ENCODE measurements at regions of chr3 and their contacts with region 1.

Region 1: DNA sequence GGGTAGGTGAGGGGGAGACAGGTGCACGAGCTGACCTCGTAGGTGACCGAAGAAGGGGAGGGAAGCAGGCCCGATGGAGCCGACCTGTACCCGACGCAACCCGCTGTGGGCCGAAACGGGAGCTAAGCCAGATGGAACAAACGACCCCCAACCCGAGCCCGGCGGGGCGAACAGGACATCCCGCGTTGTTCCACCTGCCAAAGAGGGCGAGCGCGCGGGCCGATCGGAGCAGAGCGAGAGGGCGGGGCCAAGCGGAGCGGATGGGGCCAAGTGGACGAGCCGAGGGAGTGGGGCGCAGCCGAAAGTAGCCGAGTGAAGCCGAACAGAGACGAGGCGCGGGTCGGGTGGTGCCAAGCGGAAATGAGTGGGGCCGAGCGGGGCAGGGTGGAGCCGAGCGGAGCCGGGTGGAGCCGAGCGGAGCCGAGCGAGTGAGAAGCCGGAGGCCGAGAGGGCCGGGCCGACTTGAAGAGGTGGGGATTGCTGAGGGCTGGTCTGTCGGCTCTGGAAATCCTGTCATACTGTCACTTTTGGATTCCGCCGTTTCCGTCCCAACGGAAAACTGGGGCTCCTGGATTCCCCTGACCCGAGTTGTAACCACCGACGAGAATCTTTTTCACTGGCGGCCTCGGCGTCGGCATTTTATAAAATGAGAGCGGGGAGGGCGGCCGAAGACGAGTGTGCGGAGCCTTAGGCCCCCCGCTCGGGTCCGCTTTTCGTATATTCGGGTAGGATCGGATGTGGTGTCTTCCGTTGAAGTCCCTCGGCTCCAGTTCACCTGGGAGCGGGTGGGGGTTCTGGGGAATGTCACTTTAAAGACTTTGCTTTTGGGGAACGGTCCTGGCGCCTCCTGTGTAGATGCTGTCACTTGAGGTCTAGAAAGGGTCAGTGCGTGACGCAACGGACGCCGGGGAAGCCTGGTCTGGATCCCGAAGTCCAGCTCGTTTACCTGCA is 15.6 kb upstream of the WNT7A start:
- DNase-seq: peak; percentile 98
- H3K4me3 Mint-ChIP-seq: peak overlapping the region; percentile 79
- H3K27ac Mint-ChIP-seq: peak overlapping the region; percentile 61
- H3K4me1 Mint-ChIP-seq: peaks cover 23% of the 10 kb centered on the region
- H3K27me3 Mint-ChIP-seq: no peaks in the 10 kb centered on the region

Region 2: DNA sequence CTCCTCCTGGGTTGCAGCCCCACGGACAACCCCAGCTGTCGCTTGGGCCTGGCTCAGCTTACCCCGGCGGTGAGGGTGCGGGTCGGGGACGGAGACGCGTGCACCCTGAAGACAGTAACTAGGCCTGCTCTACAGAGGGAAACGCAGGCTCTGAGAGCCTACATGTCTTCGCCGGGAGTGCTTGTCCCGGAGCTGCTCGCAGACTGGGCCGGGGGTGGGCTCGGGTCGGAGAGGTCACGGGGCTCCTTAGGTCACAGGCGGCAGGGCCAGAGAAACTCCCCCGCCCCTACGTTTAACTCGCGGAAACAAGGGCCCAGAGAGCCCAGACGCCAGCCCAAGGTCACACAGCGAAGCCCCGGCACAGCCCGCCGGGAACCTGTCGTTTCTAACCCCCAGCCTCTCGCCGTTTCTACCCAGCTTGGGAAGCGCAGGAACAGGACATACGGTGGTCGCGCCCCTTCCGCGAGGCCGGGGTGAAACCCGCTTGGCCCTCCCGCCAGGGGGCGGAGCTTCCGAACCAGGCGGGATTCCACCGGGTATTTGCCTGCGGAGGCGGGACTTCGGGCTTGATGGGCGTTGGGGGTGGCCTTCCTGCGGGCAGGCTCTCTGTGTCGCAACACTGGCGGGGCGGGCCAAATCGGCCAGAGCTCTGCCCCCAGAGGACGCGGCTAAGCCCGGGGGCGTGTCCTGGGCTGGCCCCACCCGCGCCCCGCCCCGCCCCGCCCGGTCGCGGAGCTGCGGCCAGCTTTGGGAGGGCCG is 415.7 kb before region 1 on chr3 and contains the start of gene HDAC11:
- CTCF ChIA-PET with region 1: interaction called, 3 read pairs
- intact Hi-C with region 1: loop called (anchors 5 kb)
- DNase-seq: peak; percentile 99
- H3K4me3 Mint-ChIP-seq: peak within 1 kb of the TSS; percentile 92
- H3K27ac Mint-ChIP-seq: peak within 1 kb of the TSS; percentile 82
- H3K4me1 Mint-ChIP-seq: peaks cover 12% of the 10 kb centered on the region
- H3K27me3 Mint-ChIP-seq: no peaks in the 10 kb centered on the region
- total RNA-seq, gene HDAC11: 1.6 to 2.4 TPM

Region 3: DNA sequence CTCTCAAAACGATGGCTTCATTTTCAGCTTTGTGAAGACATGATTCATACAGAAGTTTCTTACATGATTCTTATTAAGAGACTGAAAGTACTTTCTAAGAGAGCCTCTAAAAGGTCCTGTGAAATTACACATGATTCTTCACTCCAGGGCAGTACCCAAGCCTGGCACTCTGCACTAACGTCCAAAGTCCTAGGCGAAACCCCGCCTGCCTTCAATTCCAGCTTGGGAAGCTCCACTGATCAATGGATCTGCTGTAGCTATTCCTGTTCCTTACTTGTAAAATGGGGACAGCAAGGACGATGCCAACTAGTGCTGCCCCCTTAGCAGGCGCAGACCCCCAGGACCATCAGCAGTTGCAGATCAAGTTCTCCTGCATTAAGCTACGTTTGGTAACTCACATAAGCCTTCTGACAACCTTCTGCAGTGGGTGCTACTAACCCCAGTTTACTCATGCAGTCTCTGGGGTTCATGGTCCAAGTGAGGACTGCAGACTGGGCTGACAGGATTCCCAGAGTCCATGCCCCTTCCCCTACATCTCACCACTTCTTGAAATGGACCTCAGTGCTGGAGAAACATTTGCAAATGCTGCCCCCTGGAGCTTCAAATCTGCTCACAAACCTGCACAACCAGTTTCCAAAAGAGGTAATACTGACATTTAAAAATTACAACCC is 218.7 kb after region 1 on chr3:
- CTCF ChIA-PET with region 1: interaction called, 14 read pairs
- intact Hi-C with region 1: loop called (anchors 1 kb)
- DNase-seq: peak; percentile 21
- H3K4me3 Mint-ChIP-seq: no peak overlapping the region
- H3K27ac Mint-ChIP-seq: no peak overlapping the region
- H3K4me1 Mint-ChIP-seq: no peaks in the 10 kb centered on the region
- H3K27me3 Mint-ChIP-seq: no peaks in the 10 kb centered on the region

Region 4: GRCh38 chr3:14178247-14179113 is 283.1 kb after region 1 on chr3 and contains the starts of genes LSM3 and XPC:
- CTCF ChIA-PET with region 1: interaction called, 6 read pairs
- intact Hi-C with region 1: loop called (anchors 1 kb)
- DNase-seq: peak; percentile 97
- H3K4me3 Mint-ChIP-seq: peak within 1 kb of the TSS; percentile 96
- H3K27ac Mint-ChIP-seq: peak within 1 kb of the TSS; percentile 98
- H3K4me1 Mint-ChIP-seq: peaks cover 63% of the 10 kb centered on the region
- H3K27me3 Mint-ChIP-seq: no peaks in the 10 kb centered on the region
- total RNA-seq, gene LSM3: 26.1 to 26.2 TPM
- total RNA-seq, gene XPC: 39.0 to 39.8 TPM

Region 5: DNA sequence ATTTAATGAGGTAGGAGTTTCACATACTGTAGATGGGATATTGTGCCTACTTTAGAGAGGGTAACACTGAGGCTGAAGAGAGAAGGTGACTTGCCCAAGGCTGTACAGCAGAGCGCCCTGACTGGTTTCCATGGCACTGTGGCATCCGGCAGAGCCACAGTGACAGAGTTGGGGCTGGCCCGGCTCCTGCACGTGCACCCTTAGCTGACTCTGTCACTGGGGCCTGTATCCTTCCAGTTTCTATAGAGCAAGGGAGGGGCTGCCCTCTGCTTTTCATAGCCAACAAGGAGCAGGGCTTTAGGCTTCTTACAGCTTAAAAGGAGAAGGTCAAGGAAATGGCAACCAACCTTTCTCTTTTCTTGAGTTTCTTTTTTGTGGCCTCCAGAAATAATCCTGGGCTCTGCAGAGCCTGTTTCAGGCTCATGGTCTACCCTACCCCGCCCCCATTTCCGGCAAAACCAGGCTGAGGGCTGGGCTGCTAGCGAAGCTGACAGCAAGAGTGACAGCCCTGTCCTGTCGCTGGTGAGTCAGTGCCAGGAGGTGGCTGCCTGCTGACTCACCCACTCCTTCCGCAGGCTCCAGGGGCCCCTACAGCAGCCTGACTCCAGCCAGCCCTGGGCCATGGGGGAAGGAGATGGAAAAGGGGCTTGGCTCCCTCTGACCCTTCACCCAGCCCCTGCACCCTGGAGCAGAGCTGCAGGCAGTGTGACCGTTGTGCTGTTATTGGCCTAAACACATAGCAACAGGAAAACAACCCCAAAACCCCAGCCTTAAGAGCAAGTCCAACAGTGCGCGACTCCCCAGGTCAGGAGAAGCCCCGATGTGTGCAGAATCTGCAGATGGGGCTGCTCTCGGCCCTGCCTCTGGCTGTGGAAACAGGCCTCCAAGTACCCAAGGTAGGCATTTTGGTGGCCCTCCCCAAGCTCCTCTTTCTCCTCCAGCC is 536.7 kb after region 1 on chr3:
- CTCF ChIA-PET with region 1: interaction called, 3 read pairs
- intact Hi-C with region 1: loop called (anchors 2 kb)
- DNase-seq: peak; percentile 98
- H3K4me3 Mint-ChIP-seq: peak overlapping the region; percentile 66
- H3K27ac Mint-ChIP-seq: peak overlapping the region; percentile 94
- H3K4me1 Mint-ChIP-seq: peaks cover 76% of the 10 kb centered on the region
- H3K27me3 Mint-ChIP-seq: no peaks in the 10 kb centered on the region

Region 6: GRCh38 chr3:14651440-14652251 is 756.2 kb after region 1 on chr3 and contains the start of gene CCDC174:
- CTCF ChIA-PET with region 1: no interaction called
- intact Hi-C with region 1: loop called (anchors 5 kb)
- DNase-seq: peak; percentile 97
- H3K4me3 Mint-ChIP-seq: peak within 1 kb of the TSS; percentile 99
- H3K27ac Mint-ChIP-seq: peak within 1 kb of the TSS; percentile 98
- H3K4me1 Mint-ChIP-seq: peaks cover 38% of the 10 kb centered on the region
- H3K27me3 Mint-ChIP-seq: no peaks in the 10 kb centered on the region
- total RNA-seq, gene CCDC174: 16.1 to 20.7 TPM